Adrenal gland (tissue), 19 donors: ENCODE measurements at regions of chr3 and their contacts with region 1.

Region 1: GRCh38 chr3:52109611-52110301 is 44.5 kb downstream of the POC1A start:
- DNase-seq: peak in 3 of 7 donors; percentile 35 to 74 (median 42)
- H3K4me3 ChIP-seq: no peak overlapping the region
- H3K27ac ChIP-seq: peak overlapping the region in 1 of 5 donors; percentile 28
- H3K4me1 ChIP-seq: peaks cover 3 to 27% of the 10 kb centered on the region in 2 donors
- H3K27me3 ChIP-seq: no peaks in the 10 kb centered on the region
- CTCF ChIP-seq: no peak
- POLR2A ChIP-seq: no peak

Region 2: DNA sequence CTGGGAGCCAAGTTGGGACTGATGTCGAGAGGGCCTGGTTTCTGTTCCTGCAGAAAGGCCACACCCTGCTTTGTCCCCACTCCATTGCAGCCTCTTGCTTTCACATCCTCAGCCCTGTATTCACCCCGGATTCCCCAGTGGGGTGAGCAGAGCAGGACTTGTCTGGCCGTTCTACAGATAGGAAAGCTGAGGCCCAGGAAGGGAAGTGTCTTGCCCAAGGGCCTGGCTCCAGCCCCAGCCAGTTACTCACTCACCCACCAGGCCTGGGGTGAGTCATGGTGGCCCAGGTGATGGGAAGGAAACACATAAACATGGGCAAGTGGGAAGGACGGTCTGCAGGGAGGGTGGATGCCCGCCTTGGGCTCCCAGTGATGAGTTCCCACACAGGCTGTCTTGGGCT is 47.3 kb before region 1 on chr3:
- intact Hi-C with region 1: loop called in 1 of 2 experiments (anchors 10 kb)
- DNase-seq: peak in 6 of 7 donors; percentile 55 to 77 (median 64)
- H3K4me3 ChIP-seq: no peak overlapping the region
- H3K27ac ChIP-seq: no peak overlapping the region
- H3K4me1 ChIP-seq: peaks cover 0 to 5% of the 10 kb centered on the region in 2 donors
- H3K27me3 ChIP-seq: no peaks in the 10 kb centered on the region
- CTCF ChIP-seq: no peak
- POLR2A ChIP-seq: no peak